Tibial artery (tissue), 4 donors: ENCODE measurements at regions of chr22 and their contacts with region 1.

Region 1: GRCh38 chr22:25465949-25466348 is 98.5 kb upstream of the GRK3 start:
- DNase-seq: no peak
- H3K4me3 ChIP-seq: no peak overlapping the region
- H3K27ac ChIP-seq: no peak overlapping the region
- H3K4me1 ChIP-seq: no peaks in the 10 kb centered on the region
- H3K27me3 ChIP-seq: no peaks in the 10 kb centered on the region
- CTCF ChIP-seq: no peak

Region 2: DNA sequence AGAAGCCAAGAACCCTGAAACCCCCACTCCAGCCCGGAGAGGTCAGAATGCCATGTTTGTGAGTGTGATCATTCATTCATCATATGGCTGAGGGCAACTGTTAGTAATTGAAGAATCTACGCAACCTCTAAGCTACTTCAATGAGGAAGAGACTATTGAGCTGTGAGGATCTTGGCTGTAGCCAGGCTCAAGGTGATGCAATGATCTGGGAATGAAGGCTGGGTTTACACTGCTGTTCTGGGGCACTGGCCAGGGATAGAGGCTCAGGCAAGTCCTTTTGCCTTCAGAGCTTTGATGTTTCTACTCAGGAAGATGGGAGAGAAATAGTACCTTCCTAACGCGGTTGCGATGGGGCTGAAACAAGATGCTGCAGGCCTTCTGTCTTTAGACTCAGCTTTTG is 233.6 kb before region 1 on chr22:
- intact Hi-C with region 1: no loop called
- DNase-seq: no peak
- H3K4me3 ChIP-seq: no peak overlapping the region
- H3K27ac ChIP-seq: no peak overlapping the region
- H3K4me1 ChIP-seq: no peaks in the 10 kb centered on the region
- H3K27me3 ChIP-seq: peaks cover 0 to 24% of the 10 kb centered on the region in 2 donors
- CTCF ChIP-seq: no peak

Region 3: DNA sequence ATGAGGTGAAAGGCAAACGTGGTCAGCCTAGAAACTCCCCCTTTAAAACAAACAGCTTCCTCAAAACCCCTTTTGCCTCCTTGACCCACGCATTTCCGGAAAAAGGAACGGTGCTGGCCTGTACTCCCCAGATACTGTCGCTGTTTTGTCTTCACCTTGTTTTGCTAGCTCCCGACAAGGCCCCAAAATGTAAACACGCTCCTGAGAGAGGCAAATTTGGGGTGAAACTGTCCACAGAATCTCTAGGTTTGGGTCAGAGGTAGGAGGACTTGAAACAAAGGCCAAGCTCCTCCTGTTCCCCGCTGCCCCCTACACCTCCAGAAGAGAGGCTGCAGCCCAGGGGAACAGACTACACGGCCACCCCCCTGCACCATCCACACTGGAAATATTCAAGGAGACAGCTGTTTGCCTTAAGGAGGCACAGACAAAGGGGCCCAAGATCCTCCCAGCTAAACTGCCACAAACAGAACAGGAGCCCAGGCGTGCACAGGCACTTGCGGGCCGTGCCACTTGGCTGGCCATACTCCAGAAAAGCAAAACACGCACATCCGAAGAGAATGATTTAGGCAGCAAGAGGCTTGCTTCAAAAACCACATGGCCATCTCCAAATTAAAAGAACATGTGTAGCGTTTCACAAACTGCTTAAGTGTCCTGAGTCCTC is 62.0 kb before region 1 on chr22:
- intact Hi-C with region 1: no loop called
- DNase-seq: no peak
- H3K4me3 ChIP-seq: peak overlapping the region; percentile 62 to 66
- H3K27ac ChIP-seq: peak overlapping the region; percentile 82 to 83
- H3K4me1 ChIP-seq: peaks cover 0 to 45% (median 32%) of the 10 kb centered on the region in 4 donors
- H3K27me3 ChIP-seq: no peaks in the 10 kb centered on the region
- CTCF ChIP-seq: no peak

Region 4: DNA sequence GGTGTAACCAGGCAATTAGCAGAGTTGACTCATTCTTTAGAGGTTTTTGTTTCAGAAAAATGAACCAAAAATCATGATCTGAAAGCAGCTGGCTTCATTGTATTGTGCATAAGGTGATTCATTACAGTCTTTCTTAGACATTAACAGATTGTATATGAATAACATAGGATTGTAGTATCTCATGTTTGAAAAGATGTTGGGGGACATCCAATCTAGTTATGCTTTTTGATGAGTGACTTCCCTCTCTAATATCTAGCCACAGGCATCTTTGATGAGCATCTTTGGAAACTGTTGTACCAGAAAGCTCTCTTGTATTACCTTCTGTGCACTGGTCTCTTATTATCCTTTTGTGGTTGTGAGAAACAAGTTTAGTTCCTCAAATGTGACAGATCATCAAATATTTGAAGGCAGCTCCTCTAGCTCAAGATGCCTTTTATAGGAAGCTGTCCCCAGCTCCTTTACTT is 106.8 kb after region 1 on chr22:
- intact Hi-C with region 1: no loop called
- DNase-seq: no peak
- H3K4me3 ChIP-seq: no peak overlapping the region
- H3K27ac ChIP-seq: no peak overlapping the region
- H3K4me1 ChIP-seq: no peaks in the 10 kb centered on the region
- H3K27me3 ChIP-seq: no peaks in the 10 kb centered on the region
- CTCF ChIP-seq: no peak

Region 5: GRCh38 chr22:25696763-25697667 is 231.1 kb after region 1 on chr22:
- intact Hi-C with region 1: loop called (anchors 10 kb)
- DNase-seq: no peak
- H3K4me3 ChIP-seq: no peak overlapping the region
- H3K27ac ChIP-seq: no peak overlapping the region
- H3K4me1 ChIP-seq: no peaks in the 10 kb centered on the region
- H3K27me3 ChIP-seq: no peaks in the 10 kb centered on the region
- CTCF ChIP-seq: no peak